ENCODE measurements at regions of chr13 and their contacts with region 1.

Region 1: DNA sequence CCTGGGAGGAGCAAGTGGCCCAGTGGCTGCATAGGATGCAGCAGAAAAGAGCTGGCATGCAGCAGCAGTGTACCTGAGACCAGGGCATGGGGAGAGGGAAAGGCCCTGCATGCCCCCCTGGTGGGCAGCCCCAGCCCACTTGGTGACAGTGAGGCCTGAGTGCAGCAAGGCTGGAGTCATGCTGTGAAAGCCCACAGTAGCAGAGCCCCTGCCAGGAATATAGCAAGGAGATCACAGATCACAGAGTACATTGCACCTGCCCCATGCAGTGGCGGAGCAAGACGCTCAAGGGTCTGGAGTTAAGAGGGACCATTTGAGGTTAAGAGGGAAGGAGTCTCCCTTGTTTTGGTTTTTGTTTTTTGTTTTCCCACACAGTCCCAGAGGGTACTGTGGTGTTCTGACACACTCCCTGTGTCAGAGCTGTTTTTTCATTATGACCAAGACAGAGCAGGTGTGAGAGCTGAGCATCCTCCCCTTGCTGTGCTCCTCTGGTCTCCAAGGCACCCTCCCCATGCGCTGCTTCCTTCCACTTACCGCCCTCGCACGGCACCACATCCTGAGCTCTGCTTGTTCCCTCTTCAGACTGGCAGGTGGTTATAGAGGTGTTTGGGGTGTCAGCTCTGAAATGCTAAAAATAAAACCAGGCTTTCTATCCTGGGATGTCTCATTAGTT is 85.0 kb upstream of the UBL3 start:
- DNase-seq: peak; percentile 94
- H3K4me3 Mint-ChIP-seq: peak overlapping the region; percentile 77
- H3K27ac Mint-ChIP-seq: peak overlapping the region; percentile 84
- H3K4me1 Mint-ChIP-seq: peaks cover 50% of the 10 kb centered on the region
- H3K27me3 Mint-ChIP-seq: no peaks in the 10 kb centered on the region

Region 2: GRCh38 chr13:29595380-29596063 is 339.9 kb before region 1 on chr13 and contains the start of gene SLC7A1:
- CTCF ChIA-PET with region 1: no interaction called
- POLR2A ChIA-PET with region 1: no interaction called
- intact Hi-C with region 1: loop called (anchors 2 kb)
- DNase-seq: peak; percentile 90
- H3K4me3 Mint-ChIP-seq: peak within 1 kb of the TSS; percentile 89
- H3K27ac Mint-ChIP-seq: peak within 1 kb of the TSS; percentile 97
- H3K4me1 Mint-ChIP-seq: peaks cover 45% of the 10 kb centered on the region
- H3K27me3 Mint-ChIP-seq: peaks cover 1% of the 10 kb centered on the region
- total RNA-seq, gene SLC7A1: 106 to 114 TPM

Region 3: GRCh38 chr13:29771247-29771646 is 164.2 kb before region 1 on chr13:
- CTCF ChIA-PET with region 1: interaction called, 6 read pairs
- POLR2A ChIA-PET with region 1: no interaction called
- intact Hi-C with region 1: loop called (anchors 1 kb)
- DNase-seq: no peak
- H3K4me3 Mint-ChIP-seq: no peak overlapping the region
- H3K27ac Mint-ChIP-seq: no peak overlapping the region
- H3K4me1 Mint-ChIP-seq: peaks cover 4% of the 10 kb centered on the region
- H3K27me3 Mint-ChIP-seq: no peaks in the 10 kb centered on the region

Region 4: DNA sequence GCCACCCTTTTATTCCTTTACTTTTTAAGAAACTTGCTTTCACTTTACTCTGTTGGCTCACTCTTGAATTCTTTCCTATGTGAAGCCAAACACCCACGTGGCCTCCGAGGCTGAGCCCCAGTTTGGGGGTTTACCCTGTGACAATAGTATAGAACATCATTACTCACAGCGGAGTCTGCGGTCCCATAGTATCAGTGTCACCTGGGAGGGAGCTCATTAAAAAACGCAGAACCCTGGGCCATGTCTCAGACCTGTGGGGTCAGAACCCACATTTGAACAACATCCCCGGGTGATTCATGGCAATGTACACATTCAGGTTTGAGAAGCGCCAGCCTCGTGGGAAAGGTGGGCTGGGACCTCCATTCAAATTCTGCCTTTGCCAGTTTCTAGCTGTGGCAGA is 49.0 kb before region 1 on chr13:
- CTCF ChIA-PET with region 1: no interaction called
- POLR2A ChIA-PET with region 1: interaction called, 5 read pairs
- intact Hi-C with region 1: loop called (anchors 1 kb)
- DNase-seq: peak; percentile 77
- H3K4me3 Mint-ChIP-seq: no peak overlapping the region
- H3K27ac Mint-ChIP-seq: no peak overlapping the region
- H3K4me1 Mint-ChIP-seq: peaks cover 14% of the 10 kb centered on the region
- H3K27me3 Mint-ChIP-seq: no peaks in the 10 kb centered on the region

Region 5: GRCh38 chr13:29954082-29955028 is 18.9 kb after region 1 on chr13:
- CTCF ChIA-PET with region 1: interaction called, 6 read pairs
- POLR2A ChIA-PET with region 1: interaction called, 3 read pairs
- intact Hi-C with region 1: loop called (anchors 1 kb)
- DNase-seq: peak; percentile 66
- H3K4me3 Mint-ChIP-seq: peak overlapping the region; percentile 63
- H3K27ac Mint-ChIP-seq: peak overlapping the region; percentile 76
- H3K4me1 Mint-ChIP-seq: peaks cover 30% of the 10 kb centered on the region
- H3K27me3 Mint-ChIP-seq: no peaks in the 10 kb centered on the region

Region 6: DNA sequence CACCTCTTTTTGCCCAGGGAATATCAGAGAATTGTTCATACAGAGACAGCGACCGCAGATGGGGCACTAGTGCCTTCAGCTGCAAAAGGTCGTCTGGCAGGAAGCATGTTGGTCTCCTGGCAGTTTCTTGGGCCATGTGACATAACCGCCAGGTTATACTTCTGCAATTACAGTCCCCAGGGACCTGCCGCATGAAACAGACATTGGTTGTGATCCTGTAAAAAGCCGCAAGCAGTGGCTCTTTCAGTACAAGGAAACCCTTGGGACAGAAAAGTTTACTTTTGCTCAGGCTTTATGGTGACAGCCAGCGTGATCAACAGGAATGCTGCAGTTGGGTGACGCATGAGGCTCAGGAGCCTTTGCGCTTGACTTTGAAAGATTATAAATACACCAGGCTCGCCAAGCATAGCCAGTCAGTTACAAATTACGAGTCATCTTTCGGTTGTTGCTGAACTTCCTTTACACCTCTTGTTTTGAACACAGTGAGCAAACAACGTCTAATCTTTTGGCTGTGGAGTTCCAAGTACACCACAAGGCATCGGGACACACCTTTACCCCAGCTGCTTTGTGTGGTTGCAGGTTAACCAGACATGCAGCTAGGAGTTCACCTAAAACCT is 436.3 kb after region 1 on chr13:
- CTCF ChIA-PET with region 1: interaction called, 3 read pairs
- POLR2A ChIA-PET with region 1: no interaction called
- intact Hi-C with region 1: loop called (anchors 5 kb)
- DNase-seq: peak; percentile 84
- H3K4me3 Mint-ChIP-seq: peak overlapping the region; percentile 55
- H3K27ac Mint-ChIP-seq: peak overlapping the region; percentile 82
- H3K4me1 Mint-ChIP-seq: peaks cover 79% of the 10 kb centered on the region
- H3K27me3 Mint-ChIP-seq: no peaks in the 10 kb centered on the region